ENCODE measurements at regions of chr21 and their contacts with region 1.

Region 1: DNA sequence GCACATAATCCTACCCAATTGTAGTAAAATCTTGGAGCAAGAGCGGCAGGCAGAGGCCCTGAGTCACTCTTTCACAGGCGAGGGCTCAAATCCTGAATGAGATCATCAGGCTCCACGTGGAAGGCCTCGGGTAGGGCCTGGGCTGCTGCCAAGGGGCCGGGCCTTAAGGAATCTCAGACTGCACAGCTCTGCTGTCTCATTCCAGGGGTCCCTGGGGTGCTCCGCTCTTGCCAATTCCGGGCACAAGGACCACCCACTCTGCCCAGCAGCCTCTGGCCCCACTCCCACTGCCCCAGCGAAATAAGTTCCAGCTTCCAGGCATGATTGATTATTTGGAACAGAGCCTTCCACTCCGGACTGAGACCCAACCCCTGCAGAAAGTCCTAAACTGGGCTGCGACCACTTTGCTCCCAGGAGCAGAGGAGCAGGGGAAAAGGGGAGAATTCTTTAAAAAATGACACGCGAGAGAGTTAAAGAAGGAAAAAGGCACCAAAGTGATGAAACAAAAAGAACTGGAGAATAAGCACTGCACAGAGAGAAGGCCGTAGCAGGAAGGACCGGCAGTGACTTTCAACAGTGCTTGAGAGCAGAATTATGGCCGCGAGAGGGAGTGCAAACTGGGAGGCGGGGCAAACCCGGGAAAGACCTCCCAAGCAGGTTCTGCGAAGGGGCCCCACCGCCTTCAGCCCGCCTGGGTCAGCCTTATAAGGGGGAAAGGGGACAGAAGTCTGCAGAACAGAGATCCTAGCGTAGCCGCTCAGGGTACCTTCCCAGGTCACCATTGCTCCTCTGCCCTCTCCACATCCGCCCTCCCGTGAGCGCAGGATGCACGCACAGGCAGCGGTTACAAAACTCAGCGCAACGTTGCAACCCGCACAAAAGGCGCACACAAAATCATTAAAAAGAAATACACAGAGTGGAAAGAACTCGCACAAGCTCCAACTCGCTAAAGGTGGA is 2.0 kb downstream of the ADAMTS1 start:
- DNase-seq: peak; percentile 87
- H3K4me3 ChIP-seq: peak overlapping the region; percentile 37 to 67 (median 57)
- H3K27ac ChIP-seq: peak overlapping the region; percentile 81 to 94 (median 92)
- H3K4me1 ChIP-seq: peaks cover 0 to 49% (median 37%) of the 10 kb centered on the region in 4 donors
- H3K27me3 ChIP-seq: peaks cover 60% of the 10 kb centered on the region
- CTCF ChIP-seq: peak in 4 of 5 experiments; percentile 15 to 25 (median 20)
- EP300 ChIP-seq: no peak
- POLR2A ChIP-seq: no peak

Region 2: GRCh38 chr21:28069450-28069923 is 1226.2 kb after region 1 on chr21:
- in situ Hi-C with region 1: loop called in 1 of 4 experiments (anchors 25 kb)
- intact Hi-C with region 1: no loop called
- DNase-seq: no peak
- H3K4me3 ChIP-seq: no peak overlapping the region
- H3K27ac ChIP-seq: no peak overlapping the region
- H3K4me1 ChIP-seq: peaks cover 0 to 5% (median 3%) of the 10 kb centered on the region in 4 donors
- H3K27me3 ChIP-seq: no peaks in the 10 kb centered on the region
- CTCF ChIP-seq: no peak
- EP300 ChIP-seq: no peak
- POLR2A ChIP-seq: no peak

Region 3: GRCh38 chr21:28745131-28746016 is 1902.1 kb after region 1 on chr21:
- in situ Hi-C with region 1: no loop called
- intact Hi-C with region 1: loop called (anchors 5 kb)
- DNase-seq: peak; percentile 78
- H3K4me3 ChIP-seq: peak overlapping the region; percentile 17 to 58 (median 36)
- H3K27ac ChIP-seq: peak overlapping the region; percentile 48 to 70 (median 62)
- H3K4me1 ChIP-seq: peaks cover 0 to 9% (median 2%) of the 10 kb centered on the region in 4 donors
- H3K27me3 ChIP-seq: no peaks in the 10 kb centered on the region
- CTCF ChIP-seq: peak; percentile 88 to 99 (median 93)
- EP300 ChIP-seq: no peak
- POLR2A ChIP-seq: no peak